ENCODE measurements at regions of chr9 and their contacts with region 1.

Region 1: DNA sequence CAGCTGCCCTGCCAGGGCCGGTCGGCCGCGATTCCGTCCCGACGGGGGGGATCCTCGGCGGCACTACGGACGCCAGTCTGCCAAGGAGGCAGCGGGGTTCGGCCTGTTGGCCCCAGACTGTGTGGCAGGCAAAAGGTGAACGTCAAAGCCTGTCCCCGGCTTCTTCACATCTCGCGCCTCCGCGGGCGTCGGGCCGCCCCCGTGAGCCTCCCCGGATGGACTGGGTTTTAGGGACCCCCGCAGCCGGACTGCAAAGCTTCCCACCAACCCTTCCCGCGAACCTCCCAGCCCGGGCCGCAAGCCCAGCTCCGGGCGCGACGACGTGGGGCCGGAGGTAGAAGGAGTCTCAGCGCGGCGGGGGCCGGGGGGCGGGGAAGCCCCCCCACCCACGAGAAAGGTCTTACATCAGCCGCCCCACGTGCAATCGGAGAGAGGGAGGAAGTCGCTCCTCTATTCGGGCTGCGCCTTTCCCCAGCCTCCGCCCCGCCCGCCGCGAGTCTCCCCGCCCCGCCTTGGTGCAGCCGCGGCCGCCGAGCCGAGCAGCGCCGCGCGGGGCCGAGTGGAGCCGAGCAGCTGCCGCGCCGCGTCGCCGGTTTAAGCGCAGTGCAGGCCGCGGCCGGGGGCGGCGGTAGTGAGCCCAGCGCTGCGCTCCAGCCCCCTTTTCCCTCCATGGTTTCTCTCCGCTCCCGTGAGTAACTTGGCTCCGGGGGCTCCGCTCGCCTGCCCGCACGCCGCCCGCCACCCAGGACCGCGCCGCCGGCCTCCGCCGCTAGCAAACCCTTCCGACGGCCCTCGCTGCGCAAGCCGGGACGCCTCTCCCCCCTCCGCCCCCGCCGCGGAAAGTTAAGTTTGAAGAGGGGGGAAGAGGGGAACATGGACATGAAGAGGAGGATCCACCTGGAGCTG is at the start of gene ANP32B:
- DNase-seq: peak; percentile 89 to 90
- H3K4me3 ChIP-seq: peak within 1 kb of the TSS; percentile 30 to 99 (median 94)
- H3K27ac ChIP-seq: peak within 1 kb of the TSS; percentile 93 to 99 (median 98)
- H3K4me1 ChIP-seq: peaks cover 20 to 22% of the 10 kb centered on the region in 2 donors
- H3K27me3 ChIP-seq: no peaks in the 10 kb centered on the region
- CTCF ChIP-seq: peak; percentile 35 to 98 (median 92)
- POLR2A ChIP-seq: peak in 1 of 2 donors; percentile 65
- total RNA-seq, gene ANP32B: 19.7 to 32.1 (median 27.5) TPM

Region 2: DNA sequence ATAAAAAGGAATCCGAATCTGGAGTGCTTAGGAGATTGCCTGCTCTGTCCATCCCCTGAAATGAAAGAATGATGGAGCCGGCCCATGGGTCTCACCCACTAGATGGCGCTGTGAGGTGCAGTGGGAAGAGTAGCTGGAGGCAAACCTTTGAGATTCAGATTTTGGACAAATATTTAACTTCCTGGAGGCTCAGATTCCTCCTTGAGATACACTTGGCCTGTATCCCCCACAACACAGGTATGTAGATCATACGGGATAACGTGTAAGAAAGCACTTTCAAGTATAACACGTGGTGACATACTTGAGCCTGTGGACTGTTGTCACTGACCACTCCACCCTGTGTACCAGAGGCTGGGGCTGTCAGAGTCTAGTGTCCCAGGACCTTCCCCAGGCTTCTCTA is 92.9 kb before region 1 on chr9:
- intact Hi-C with region 1: no loop called
- DNase-seq: peak; percentile 36 to 52
- H3K4me3 ChIP-seq: no peak overlapping the region
- H3K27ac ChIP-seq: no peak overlapping the region
- H3K4me1 ChIP-seq: peaks cover 0 to 16% of the 10 kb centered on the region in 2 donors
- H3K27me3 ChIP-seq: no peaks in the 10 kb centered on the region
- CTCF ChIP-seq: peak; percentile 16 to 69 (median 44)
- POLR2A ChIP-seq: no peak

Region 3: GRCh38 chr9:97921959-97922724 is 60.8 kb before region 1 on chr9 and contains the start of gene TRMO:
- intact Hi-C with region 1: loop called (anchors 5 kb)
- DNase-seq: peak; percentile 97
- H3K4me3 ChIP-seq: peak within 1 kb of the TSS; percentile 29 to 50 (median 45)
- H3K27ac ChIP-seq: peak within 1 kb of the TSS; percentile 89 to 100 (median 96)
- H3K4me1 ChIP-seq: peaks cover 24 to 25% of the 10 kb centered on the region in 2 donors
- H3K27me3 ChIP-seq: no peaks in the 10 kb centered on the region
- CTCF ChIP-seq: peak in 5 of 6 experiments; percentile 11 to 82 (median 68)
- POLR2A ChIP-seq: peak; percentile 59 to 92
- total RNA-seq, gene TRMO: 56.6 to 81.6 (median 59.0) TPM

Region 4: DNA sequence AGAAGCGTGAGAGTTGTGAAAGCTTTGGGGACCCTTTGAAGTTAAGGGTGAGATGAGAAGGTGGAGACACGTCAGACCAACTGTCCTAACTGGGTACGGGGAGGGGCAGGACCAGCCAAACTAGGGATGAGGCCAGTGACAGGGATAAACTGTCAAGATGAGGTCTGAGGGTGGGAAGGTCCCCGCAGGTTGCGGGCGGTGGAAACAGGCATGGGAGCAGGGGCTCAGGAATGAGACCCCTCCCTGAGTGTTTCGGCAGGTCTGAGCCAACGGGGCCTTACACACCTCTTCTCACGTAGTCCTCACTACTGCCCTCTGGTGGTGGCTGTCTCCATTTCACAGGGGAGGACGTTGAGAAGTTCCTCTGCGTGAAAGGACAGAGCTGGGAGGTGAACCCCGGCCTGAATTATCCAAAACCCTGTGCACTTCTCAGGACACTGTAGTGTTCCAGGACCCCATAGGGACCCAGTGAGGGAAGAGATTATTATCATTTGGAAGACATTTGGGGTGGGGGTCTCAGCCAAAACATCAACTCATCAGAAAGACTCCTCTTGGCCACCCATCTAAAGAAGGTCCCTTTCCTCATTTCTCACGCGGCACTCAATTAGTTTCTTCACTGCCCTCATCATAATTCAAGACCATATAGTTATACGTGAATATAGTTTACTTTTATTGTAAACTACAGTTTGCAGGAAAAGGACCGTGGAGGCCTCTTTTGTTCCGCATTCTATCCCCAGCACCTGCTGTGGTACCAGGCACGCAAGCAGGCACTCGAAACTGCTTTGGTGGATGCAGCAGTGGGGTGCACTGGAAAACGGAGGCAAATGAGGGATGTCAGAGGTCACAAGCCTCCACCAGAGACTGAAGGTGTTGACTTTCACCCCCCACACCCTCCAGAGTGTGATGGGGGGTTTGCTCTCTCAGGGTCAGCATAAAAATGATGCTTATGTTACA is 51.9 kb after region 1 on chr9:
- intact Hi-C with region 1: loop called (anchors 10 kb)
- DNase-seq: peak; percentile 86 to 90
- H3K4me3 ChIP-seq: no peak overlapping the region
- H3K27ac ChIP-seq: no peak overlapping the region
- H3K4me1 ChIP-seq: peaks cover 0 to 18% of the 10 kb centered on the region in 2 donors
- H3K27me3 ChIP-seq: no peaks in the 10 kb centered on the region
- CTCF ChIP-seq: peak; percentile 60 to 84 (median 74)
- POLR2A ChIP-seq: no peak

Measured in thyroid gland (tissue), 4 donors.